Calu3 (cell line): ENCODE measurements at regions of chr3 and their contacts with region 1.

Region 1: DNA sequence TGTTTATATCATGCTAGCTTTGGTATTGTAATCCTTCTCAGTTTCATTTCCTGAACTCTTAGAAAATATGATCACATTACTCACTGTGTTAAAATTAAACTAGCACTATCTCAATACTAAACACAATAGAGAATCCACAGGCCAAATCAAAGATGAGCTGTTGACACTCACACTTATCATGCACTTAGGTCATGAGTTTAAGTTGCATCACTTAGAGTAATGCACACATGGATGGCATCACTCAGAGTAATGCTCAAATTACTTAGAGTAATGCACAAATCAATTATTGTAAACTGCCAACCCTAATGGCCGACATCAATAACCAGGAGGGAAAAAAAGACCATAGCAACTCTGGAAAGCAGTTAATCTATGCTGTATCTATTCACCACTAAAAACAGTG is 40.0 kb upstream of the MCF2L2 start:
- DNase-seq: no peak
- H3K4me3 Mint-ChIP-seq: no peak overlapping the region
- H3K27ac Mint-ChIP-seq: no peak overlapping the region
- H3K4me1 Mint-ChIP-seq: no peaks in the 10 kb centered on the region
- H3K27me3 Mint-ChIP-seq: peaks cover 16% of the 10 kb centered on the region
- CTCF ChIP-seq: no peak

Region 2: DNA sequence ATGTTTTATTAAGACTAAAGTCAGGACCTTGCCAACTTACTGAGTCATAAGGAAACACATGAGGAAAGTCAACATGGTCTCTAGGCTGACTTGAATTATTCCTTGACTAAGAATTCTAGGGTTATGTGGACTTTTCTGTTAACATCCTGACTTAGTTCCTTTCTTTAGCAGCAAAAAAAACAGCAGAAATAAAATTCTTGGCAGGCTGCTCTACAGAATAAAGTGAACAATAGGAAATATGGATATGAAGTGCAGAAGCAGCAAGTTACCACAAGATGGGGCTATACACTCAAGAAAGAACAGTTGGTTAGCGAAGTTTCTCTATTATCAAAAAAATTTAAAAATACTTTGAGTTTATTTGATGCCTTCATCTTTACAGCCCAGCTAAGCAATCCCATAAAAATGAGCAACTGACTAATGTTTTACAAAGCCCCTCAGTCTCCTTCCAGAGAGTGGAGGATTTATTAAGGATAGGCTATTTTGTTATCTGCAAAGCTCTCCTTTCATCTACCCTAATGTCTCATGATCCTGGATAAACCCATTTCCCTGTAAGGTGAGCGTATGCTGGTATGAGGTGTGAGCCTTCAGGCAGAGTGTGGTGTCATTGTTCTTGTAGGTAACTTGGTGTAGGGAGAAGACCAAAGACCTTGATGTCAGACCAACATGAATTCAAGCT is 346.0 kb before region 1 on chr3:
- CTCF ChIA-PET with region 1: no interaction called
- intact Hi-C with region 1: loop called (anchors 5 kb)
- DNase-seq: no peak
- H3K4me3 Mint-ChIP-seq: no peak overlapping the region
- H3K27ac Mint-ChIP-seq: no peak overlapping the region
- H3K4me1 Mint-ChIP-seq: peaks cover 25% of the 10 kb centered on the region
- H3K27me3 Mint-ChIP-seq: peaks cover 13% of the 10 kb centered on the region
- CTCF ChIP-seq: peak; percentile 86

Region 3: GRCh38 chr3:183560607-183561006 is 92.2 kb after region 1 on chr3:
- CTCF ChIA-PET with region 1: interaction called, 6 read pairs
- intact Hi-C with region 1: loop called (anchors 1 kb)
- DNase-seq: peak; percentile 42
- H3K4me3 Mint-ChIP-seq: no peak overlapping the region
- H3K27ac Mint-ChIP-seq: no peak overlapping the region
- H3K4me1 Mint-ChIP-seq: no peaks in the 10 kb centered on the region
- H3K27me3 Mint-ChIP-seq: no peaks in the 10 kb centered on the region
- CTCF ChIP-seq: no peak

Region 4: DNA sequence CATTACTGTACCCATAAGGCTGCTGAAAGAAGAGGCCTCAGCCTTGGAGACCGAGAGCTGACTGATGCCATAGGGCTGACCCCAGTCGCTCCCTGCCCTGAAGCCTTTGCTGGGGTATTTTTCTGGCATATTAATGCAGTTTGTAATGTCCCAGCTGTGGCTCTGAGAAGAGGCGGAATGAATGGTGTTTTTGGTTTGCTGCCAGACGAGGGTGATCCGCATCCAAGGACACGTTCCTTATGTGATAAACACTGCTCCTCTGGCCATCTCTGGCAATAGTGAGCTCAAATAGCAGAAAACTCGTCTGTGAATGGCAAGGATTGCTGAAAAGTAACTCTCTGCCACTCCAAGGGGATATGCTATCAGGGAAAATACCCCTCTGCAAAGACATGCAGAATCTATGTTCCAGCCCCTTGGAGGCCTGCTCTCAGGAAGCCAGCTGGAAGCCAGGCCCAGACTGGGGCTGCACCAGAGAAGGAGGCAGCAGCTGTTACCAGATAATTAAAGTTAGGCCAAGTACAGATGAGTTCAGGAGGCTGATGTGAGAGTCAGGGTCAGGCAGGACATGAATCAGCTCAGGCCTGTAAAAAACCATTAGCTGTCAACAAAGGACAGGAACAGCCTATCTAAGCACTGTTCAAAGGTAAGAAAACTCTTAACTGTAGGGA is 116.0 kb after region 1 on chr3:
- CTCF ChIA-PET with region 1: no interaction called
- intact Hi-C with region 1: no loop called
- DNase-seq: no peak
- H3K4me3 Mint-ChIP-seq: no peak overlapping the region
- H3K27ac Mint-ChIP-seq: no peak overlapping the region
- H3K4me1 Mint-ChIP-seq: no peaks in the 10 kb centered on the region
- H3K27me3 Mint-ChIP-seq: peaks cover 37% of the 10 kb centered on the region
- CTCF ChIP-seq: no peak

Region 5: DNA sequence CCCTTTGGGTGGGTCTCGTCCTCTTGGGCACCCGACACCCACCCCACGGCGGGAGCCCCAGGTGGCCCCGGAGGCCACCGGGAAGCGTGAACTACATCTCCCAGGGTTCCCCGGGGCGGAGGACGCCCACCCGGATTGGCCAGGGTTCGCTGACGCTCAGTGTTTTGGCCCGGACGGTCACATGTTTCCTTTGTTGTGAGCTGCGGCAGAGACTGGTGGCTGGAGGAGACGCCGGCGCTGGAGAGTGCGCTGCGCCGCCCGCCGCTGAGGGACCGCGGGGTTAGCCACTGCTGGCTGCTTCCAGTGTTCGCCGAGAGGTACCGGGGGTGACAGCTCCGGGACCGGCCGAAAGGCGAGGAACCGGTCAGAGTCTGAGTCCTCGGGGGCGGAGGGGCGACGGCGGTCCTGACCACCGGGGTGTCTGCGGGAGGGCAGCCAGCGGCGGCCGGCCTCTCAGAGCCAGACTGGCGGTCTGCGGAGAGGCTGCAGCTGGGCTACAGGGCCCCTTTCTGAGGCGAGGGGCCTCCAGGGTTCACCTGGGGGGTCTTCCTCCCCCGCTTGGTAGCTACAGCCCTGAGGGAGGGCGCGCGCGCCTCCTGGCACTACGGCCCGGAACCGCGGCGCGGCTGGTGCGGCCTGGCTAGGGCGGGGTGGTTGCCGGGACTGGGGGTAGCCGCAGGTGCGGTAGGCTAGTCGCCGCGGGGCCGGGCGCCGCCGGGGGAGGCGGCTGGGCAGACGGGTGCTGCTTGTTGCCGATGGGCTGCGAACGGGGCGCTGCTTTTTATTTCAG is 167.2 kb after region 1 on chr3 and contains the start of gene KLHL24:
- CTCF ChIA-PET with region 1: no interaction called
- intact Hi-C with region 1: loop called (anchors 5 kb)
- DNase-seq: peak; percentile 98
- H3K4me3 Mint-ChIP-seq: peak within 1 kb of the TSS; percentile 99
- H3K27ac Mint-ChIP-seq: peak within 1 kb of the TSS; percentile 85
- H3K4me1 Mint-ChIP-seq: peaks cover 21% of the 10 kb centered on the region
- H3K27me3 Mint-ChIP-seq: peaks cover 1% of the 10 kb centered on the region
- CTCF ChIP-seq: peak; percentile 32
- total RNA-seq, gene KLHL24: 38.2 and 42.7 TPM in 2 replicates

Region 6: GRCh38 chr3:183697610-183698317 is 229.3 kb after region 1 on chr3 and contains the start of gene YEATS2:
- CTCF ChIA-PET with region 1: interaction called, 4 read pairs
- intact Hi-C with region 1: loop called (anchors 2 kb)
- DNase-seq: peak; percentile 81
- H3K4me3 Mint-ChIP-seq: peak within 1 kb of the TSS; percentile 68
- H3K27ac Mint-ChIP-seq: peak within 1 kb of the TSS; percentile 6
- H3K4me1 Mint-ChIP-seq: peaks cover 24% of the 10 kb centered on the region
- H3K27me3 Mint-ChIP-seq: no peaks in the 10 kb centered on the region
- CTCF ChIP-seq: no peak
- total RNA-seq, gene YEATS2: 54.6 and 57.4 TPM in 2 replicates

Region 7: DNA sequence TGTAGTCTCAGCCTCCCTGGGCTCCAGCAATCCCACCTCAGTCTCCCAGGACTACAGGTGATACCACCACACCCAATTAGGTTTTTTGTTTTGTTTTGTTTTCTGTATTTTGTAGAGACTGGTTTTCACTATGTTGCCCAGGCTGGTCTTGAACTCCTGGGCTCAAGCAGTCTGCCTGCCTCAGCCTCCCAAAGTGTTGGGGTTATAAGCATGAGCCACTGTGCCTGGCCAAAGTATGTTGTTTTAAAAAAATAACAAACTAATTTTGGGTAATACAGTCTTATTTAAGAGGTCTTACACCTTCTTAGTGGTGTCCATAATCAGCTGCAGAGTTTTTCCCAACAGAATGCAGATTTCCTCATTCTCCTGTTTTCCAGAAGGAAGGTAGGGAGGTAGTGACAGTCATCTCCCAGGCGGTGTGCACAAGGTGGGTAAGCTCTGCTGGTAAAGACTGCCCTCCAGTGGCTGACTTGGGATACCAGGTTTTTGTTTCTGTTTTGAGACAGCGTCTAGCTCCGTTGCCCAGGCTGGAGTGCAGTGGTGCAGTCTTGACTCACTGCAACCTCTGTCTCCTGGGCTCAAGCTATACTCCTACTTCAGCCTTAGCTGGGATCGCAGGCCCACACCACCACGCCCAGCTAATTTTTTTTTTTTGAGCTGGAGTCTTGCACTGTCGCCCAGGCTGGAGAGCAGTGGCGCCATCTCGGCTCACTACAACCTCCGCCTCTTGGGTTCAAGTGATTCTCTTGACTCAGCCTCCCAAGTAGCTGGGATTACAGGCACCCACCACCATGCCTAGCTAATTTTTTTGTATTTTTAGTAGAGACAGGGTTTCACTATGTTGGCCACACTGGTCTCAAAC is 298.6 kb after region 1 on chr3:
- CTCF ChIA-PET with region 1: interaction called, 7 read pairs
- intact Hi-C with region 1: loop called (anchors 1 kb)
- DNase-seq: peak; percentile 89
- H3K4me3 Mint-ChIP-seq: no peak overlapping the region
- H3K27ac Mint-ChIP-seq: no peak overlapping the region
- H3K4me1 Mint-ChIP-seq: peaks cover 24% of the 10 kb centered on the region
- H3K27me3 Mint-ChIP-seq: no peaks in the 10 kb centered on the region
- CTCF ChIP-seq: peak; percentile 96

Region 8: GRCh38 chr3:183884427-183885296 is 416.2 kb after region 1 on chr3 and contains the start of gene PARL:
- CTCF ChIA-PET with region 1: no interaction called
- intact Hi-C with region 1: loop called (anchors 1 kb)
- DNase-seq: peak; percentile 100
- H3K4me3 Mint-ChIP-seq: peak within 1 kb of the TSS; percentile 99
- H3K27ac Mint-ChIP-seq: peak within 1 kb of the TSS; percentile 89
- H3K4me1 Mint-ChIP-seq: peaks cover 14% of the 10 kb centered on the region
- H3K27me3 Mint-ChIP-seq: peaks cover 19% of the 10 kb centered on the region
- CTCF ChIP-seq: peak; percentile 97
- total RNA-seq, gene PARL: 80.4 and 84.3 TPM in 2 replicates